RWPE1 (cell line): ENCODE measurements at regions of chr9 and their contacts with region 1.

Region 1: DNA sequence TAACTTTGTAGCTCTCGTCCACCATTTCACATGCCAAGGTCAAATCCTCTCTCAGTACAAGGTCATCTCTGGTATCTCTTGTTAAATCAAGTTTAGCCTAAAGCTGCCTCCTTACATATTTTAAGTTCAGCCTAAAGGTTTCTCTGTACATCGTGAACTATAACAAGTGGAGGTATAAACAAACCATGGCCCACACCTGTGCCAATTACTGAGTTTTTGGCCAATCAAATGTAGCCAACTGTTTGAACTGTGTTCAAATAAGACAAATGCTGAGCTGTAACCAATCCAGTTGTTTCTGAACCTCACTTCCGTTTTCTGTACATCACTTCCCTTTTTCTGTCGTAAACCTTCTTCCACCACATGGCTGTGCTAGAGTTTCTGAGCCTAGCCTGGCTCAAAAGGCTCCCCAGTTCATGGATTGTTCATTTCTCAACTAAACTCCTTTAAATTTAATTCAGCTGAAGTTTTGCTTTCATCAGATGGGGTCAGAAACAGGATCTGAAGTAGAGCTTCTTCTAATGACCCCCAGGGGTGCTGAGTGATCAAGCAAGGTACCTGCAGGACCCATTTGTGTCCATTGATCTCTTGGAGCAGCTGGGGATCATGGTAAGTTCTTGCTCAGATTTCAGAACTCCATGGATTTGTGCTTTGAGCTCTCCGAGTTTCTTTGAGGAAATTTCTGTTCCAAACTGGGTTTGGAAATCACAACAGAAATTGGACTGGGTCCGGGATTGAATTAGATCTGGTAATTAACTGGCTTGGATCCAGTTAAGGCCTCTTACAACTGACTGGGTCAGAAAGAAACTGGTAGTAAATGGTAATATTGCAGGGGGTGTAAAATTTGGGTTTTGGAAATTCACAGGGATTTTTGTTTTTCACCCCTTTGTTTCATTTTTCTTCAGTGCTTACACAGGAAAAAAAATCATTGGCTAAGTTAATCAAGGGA is 11.0 kb upstream of the NANS start:
- DNase-seq: no peak
- H3K27ac ChIP-seq: no peak overlapping the region
- CTCF ChIP-seq: no peak

Region 2: GRCh38 chr9:98034593-98035546 is 10.6 kb before region 1 on chr9:
- CTCF ChIA-PET with region 1: interaction called, 10 read pairs
- POLR2A ChIA-PET with region 1: no interaction called
- DNase-seq: peak; percentile 73
- H3K27ac ChIP-seq: 0 out of 2 replicates have a peak overlapping the region, but pooled peaks have one; percentile 0
- CTCF ChIP-seq: peak; percentile 81